ENCODE measurements at regions of chr18 and their contacts with region 1.

Region 1: DNA sequence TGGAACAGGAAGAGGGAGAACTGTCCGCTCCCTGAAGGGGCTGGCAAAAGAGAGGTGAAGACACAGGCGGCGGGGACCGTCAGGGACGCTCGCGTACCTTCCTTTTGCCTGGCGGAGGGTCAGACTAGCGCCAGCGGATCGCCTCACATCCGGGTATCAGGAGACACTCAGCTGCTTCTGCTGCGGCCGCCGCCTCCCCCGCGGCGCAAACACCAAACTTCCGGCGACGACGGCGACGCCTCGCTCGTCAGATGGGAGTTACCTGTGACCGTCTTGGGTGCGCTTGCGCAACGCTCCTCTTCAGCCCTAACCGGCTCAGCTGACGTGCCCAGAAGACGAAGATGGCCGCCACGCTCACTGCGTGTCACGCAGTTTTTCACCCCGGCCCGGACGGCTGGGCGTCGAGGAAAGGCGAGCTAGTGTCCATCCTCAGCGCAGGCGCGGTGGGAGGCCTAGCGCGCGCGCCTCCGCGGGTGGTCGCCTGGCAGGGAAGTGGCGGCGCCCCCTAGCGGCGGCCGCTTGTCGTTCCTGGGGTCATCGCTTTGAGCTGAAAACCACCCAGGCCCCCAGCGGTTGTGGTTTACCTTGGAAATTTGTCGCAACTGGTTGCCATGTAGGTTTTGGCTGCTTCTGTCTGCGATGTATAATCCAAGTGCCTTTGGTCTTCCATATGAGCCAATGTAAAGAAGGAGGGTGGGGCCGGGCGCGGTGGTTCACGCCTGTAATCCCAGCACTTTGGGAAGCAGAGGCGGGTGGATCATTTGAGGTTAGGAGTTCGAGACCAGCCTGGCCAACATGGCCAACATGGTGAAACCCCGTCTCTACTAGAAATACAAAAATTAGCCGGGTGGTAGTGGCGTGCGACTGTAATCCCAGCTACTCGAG is at the start of gene ESCO1:
- DNase-seq: peak; percentile 95
- H3K4me3 ChIP-seq: peak within 1 kb of the TSS; percentile 88 to 93
- H3K27ac ChIP-seq: peak within 1 kb of the TSS; percentile 98
- H3K4me1 ChIP-seq: no peaks in the 10 kb centered on the region
- H3K27me3 ChIP-seq: no peaks in the 10 kb centered on the region
- CTCF ChIP-seq: peak; percentile 92 to 99 (median 98)
- POLR2A ChIP-seq: peak; percentile 88
- total RNA-seq, gene ESCO1: 19.6 to 21.8 TPM

Region 2: GRCh38 chr18:21117409-21118131 is 483.2 kb before region 1 on chr18:
- intact Hi-C with region 1: loop called (anchors 5 kb)
- DNase-seq: no peak
- H3K4me3 ChIP-seq: no peak overlapping the region
- H3K27ac ChIP-seq: no peak overlapping the region
- H3K4me1 ChIP-seq: no peaks in the 10 kb centered on the region
- H3K27me3 ChIP-seq: no peaks in the 10 kb centered on the region
- CTCF ChIP-seq: no peak
- POLR2A ChIP-seq: no peak